ENCODE measurements at regions of chr17 and their contacts with region 1.

Region 1: DNA sequence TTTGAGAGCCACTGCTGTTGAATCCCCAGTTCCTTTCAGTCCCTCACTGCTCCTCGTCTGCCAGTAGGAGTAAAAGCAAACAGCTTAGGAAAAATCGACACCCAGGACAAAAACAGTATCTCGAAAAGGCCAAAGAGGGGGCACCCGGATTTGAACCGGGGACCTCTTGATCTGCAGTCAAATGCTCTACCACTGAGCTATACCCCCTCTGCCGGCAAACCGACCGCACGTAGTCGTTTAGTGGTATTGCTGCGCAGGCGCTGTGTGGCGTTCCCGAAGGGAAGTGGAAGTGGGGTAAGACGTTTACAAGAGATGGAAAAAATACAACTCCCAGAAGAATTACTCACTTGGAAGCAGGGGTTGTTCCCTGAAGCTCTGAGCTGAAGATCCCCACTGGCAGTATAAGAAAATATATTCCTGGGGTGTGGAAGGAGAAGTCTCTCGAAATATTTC is 2.2 kb upstream of the PLXDC1 start:
- DNase-seq: peak; percentile 87
- ATAC-seq: peak; percentile 46
- H3K4me3 ChIP-seq: peak overlapping the region; percentile 90
- H3K27ac ChIP-seq: 0 out of 2 replicates have a peak overlapping the region, but pooled peaks have one; percentile 16
- H3K4me1 ChIP-seq: peaks cover 7% of the 10 kb centered on the region
- H3K27me3 ChIP-seq: peaks cover 6% of the 10 kb centered on the region; the same call in 1 of the 2 replicates
- CTCF ChIP-seq: no peak

Region 2: DNA sequence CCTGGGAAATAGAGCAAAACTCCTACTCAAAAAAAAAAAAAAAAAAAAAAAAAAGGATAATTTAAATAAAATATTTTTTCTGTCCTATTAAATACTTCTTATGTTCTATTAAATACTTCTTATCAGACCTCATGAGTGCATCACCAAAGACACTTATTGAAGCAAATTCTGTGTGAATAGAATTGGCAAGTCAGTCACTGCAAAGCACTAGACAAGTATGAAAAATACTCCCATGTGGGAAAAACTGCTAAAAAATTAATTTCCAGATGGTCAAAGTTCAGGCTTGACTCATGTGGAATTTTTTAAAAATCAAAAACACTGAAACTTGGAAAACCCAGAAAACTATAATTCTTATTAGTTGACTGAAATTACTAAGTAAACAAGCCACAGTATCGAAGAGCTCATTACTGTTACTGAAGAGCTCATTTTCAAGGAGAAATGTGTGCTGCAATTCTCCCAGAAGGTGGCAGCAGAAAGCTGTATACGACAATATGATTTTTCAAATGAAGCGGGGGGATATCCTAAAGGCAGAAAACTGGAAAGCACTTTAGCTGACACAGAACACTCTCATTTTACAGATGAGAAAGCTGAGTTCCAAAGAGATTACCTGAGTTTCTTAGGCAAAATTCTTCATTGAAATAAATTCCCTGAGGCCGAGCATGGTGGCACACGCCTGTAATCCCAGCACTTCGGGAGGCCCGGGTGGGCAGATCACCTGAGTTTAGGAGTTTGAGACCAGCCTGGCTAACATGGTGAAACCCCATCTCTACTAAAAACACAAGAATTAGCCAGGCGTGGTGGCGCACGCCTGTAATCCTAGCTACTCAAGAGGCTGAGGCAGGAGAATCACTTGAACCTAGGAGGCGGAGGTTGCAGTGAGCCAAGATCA is 170.5 kb before region 1 on chr17:
- CTCF ChIA-PET with region 1: interaction called, 56 read pairs
- POLR2A ChIA-PET with region 1: interaction called, 8 read pairs
- intact Hi-C with region 1: loop called (anchors 1 kb)
- DNase-seq: peak; percentile 68
- ATAC-seq: peak; percentile 55; the same call in 1 of the 2 replicates
- H3K4me3 ChIP-seq: no peak overlapping the region
- H3K27ac ChIP-seq: no peak overlapping the region
- H3K4me1 ChIP-seq: peaks cover 4% of the 10 kb centered on the region; the same call in 1 of the 2 replicates
- H3K27me3 ChIP-seq: no peaks in the 10 kb centered on the region
- CTCF ChIP-seq: peak; percentile 77

Region 3: GRCh38 chr17:39069114-39069756 is 84.4 kb before region 1 on chr17:
- CTCF ChIA-PET with region 1: no interaction called
- POLR2A ChIA-PET with region 1: no interaction called
- intact Hi-C with region 1: loop called (anchors 1 kb)
- DNase-seq: peak; percentile 40
- ATAC-seq: peak; percentile 54; the same call in 1 of the 2 replicates
- H3K4me3 ChIP-seq: no peak overlapping the region
- H3K27ac ChIP-seq: no peak overlapping the region
- H3K4me1 ChIP-seq: no peaks in the 10 kb centered on the region
- H3K27me3 ChIP-seq: no peaks in the 10 kb centered on the region
- CTCF ChIP-seq: peak; percentile 64